Activated B cell treated with CpG ODN at 0.5 μM for 24 hours (primary cell): ENCODE measurements at regions of chr14 and their contacts with region 1.

Region 1: GRCh38 chr14:50311975-50312733 is at the starts of genes DMAC2L and L2HGDH:
- DNase-seq: peak; percentile 91
- ATAC-seq: peak; percentile 94
- H3K4me3 Mint-ChIP-seq: peak within 1 kb of the TSS; percentile 93
- H3K27ac Mint-ChIP-seq: peak within 1 kb of the TSS; percentile 98
- H3K4me1 Mint-ChIP-seq: peaks cover 34% of the 10 kb centered on the region
- H3K27me3 Mint-ChIP-seq: no peaks in the 10 kb centered on the region
- CTCF ChIP-seq: no peak
- total RNA-seq, gene DMAC2L: 31.2 and 32.2 TPM in 2 replicates
- total RNA-seq, gene L2HGDH: 4.3 and 5.2 TPM in 2 replicates

Region 2: DNA sequence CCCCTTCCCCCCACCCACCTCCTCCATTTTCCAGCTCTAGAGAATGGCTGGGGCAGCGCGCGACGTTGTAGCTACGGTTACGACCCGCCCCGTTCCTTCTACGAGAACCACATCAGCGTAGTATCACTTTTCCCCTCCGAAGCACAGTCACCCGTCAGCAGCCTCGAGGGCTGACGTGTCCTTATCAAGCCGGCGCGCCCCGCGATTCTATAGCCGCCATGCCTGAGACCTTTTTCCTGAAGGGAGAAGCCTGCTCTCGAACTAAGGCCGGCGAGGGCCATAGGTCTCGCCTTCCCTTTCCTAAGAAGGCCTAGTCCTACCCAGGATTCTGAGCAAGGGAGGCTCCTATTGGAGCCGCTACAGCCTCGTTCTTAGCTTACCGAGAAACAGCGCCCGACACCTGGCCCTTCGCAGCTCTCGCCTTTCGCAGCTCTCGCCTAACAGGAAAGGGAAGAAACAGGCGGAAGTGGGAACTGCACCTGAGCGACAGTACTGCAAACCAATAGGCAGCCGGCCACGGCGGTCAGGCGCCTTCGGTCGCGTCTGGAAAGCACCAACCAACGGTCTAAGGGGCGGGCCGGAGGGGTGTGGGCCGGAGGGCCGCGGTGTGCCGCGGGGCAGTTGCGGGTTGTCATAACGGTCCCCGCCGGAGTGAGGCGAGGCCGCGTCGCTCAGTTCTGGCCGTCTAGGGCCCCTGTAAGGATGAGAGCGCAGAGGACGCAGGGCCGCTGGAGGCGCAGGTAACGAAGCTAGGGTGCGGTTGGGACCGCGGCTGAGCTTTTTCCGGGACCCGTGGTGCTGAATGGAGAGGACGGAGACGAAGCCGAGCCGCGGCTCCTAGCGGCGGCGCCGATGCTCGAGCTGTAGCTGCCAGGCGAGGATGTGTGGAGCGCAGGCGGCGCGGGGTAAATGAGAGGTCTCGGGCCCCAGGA is 691.7 kb before region 1 on chr14 and contains the starts of genes MGAT2 and RPL36AL:
- CTCF ChIA-PET with region 1: no interaction called
- POLR2A ChIA-PET with region 1: interaction called, 11 read pairs
- intact Hi-C with region 1: no loop called
- DNase-seq: peak; percentile 90
- ATAC-seq: peak; percentile 90
- H3K4me3 Mint-ChIP-seq: peak within 1 kb of the TSS; percentile 97
- H3K27ac Mint-ChIP-seq: peak within 1 kb of the TSS; percentile 97
- H3K4me1 Mint-ChIP-seq: peaks cover 61% of the 10 kb centered on the region
- H3K27me3 Mint-ChIP-seq: no peaks in the 10 kb centered on the region
- CTCF ChIP-seq: no peak
- total RNA-seq, gene MGAT2: 39.7 and 40.5 TPM in 2 replicates
- total RNA-seq, gene RPL36AL: 150 and 166 TPM in 2 replicates

Region 3: GRCh38 chr14:49767562-49768300 is 544.4 kb before region 1 on chr14 and contains the start of gene KLHDC2:
- CTCF ChIA-PET with region 1: interaction called, 3 read pairs
- POLR2A ChIA-PET with region 1: no interaction called
- intact Hi-C with region 1: loop called (anchors 1 kb)
- DNase-seq: peak; percentile 86
- ATAC-seq: peak; percentile 88
- H3K4me3 Mint-ChIP-seq: peak within 1 kb of the TSS; percentile 97
- H3K27ac Mint-ChIP-seq: peak within 1 kb of the TSS; percentile 99
- H3K4me1 Mint-ChIP-seq: peaks cover 33% of the 10 kb centered on the region
- H3K27me3 Mint-ChIP-seq: no peaks in the 10 kb centered on the region
- CTCF ChIP-seq: no peak
- total RNA-seq, gene KLHDC2: 27.0 and 31.2 TPM in 2 replicates

Region 4: DNA sequence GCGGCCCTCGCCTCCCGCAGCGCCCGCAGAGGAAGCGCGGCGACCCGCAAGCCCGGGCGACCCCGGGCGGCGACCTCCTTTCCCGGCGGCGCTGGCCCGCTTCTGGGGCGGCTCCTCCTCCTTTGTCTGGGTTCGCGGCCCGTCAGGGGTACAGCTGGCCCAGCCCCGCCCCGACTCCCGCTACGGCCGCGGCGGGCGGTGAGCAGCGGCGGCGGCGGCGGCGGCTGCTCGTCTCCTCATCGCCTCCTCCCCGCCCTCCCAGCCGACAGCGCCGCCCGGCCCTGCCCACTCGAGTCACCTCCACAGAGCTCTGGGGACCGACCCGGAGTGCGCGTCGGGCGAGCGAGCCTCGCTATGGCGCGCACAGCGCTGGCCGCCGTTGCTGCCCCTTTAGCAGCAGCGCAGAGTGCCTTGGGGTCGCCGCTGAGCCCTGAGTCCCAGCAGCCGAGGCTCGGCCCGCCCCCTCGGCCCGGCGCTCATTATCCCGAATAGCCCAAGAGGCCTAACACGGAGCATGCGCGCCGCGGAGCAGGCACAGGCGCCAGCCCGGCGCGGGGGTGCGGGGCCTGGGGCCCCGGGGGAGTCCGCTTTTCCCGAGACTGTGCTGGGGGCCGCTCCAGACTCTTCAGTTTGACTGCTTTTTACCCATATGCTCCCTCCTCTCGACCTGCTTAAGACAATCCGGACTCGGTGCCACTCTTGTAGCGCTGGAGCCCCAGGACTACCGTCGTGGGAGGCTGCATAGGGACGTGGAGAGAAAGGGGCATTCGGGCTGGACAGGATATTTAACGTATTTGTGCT is 80.5 kb before region 1 on chr14 and contains the start of gene SOS2:
- CTCF ChIA-PET with region 1: no interaction called
- POLR2A ChIA-PET with region 1: interaction called, 11 read pairs
- intact Hi-C with region 1: loop called (anchors 1 kb)
- DNase-seq: peak; percentile 87
- ATAC-seq: peak; percentile 87
- H3K4me3 Mint-ChIP-seq: peak within 1 kb of the TSS; percentile 93
- H3K27ac Mint-ChIP-seq: peak within 1 kb of the TSS; percentile 92
- H3K4me1 Mint-ChIP-seq: peaks cover 35% of the 10 kb centered on the region
- H3K27me3 Mint-ChIP-seq: no peaks in the 10 kb centered on the region
- CTCF ChIP-seq: no peak
- total RNA-seq, gene SOS2: 29.1 and 32.0 TPM in 2 replicates

Region 5: GRCh38 chr14:50272503-50272902 is 39.7 kb before region 1 on chr14:
- CTCF ChIA-PET with region 1: no interaction called
- POLR2A ChIA-PET with region 1: no interaction called
- intact Hi-C with region 1: no loop called
- DNase-seq: no peak
- ATAC-seq: no peak
- H3K4me3 Mint-ChIP-seq: no peak overlapping the region
- H3K27ac Mint-ChIP-seq: no peak overlapping the region
- H3K4me1 Mint-ChIP-seq: no peaks in the 10 kb centered on the region
- H3K27me3 Mint-ChIP-seq: no peaks in the 10 kb centered on the region
- CTCF ChIP-seq: no peak

Region 6: GRCh38 chr14:50396631-50397390 is 84.7 kb after region 1 on chr14 and contains the start of gene CDKL1:
- CTCF ChIA-PET with region 1: interaction called, 3 read pairs
- POLR2A ChIA-PET with region 1: interaction called, 10 read pairs
- intact Hi-C with region 1: no loop called
- DNase-seq: peak; percentile 49
- ATAC-seq: peak; percentile 69
- H3K4me3 Mint-ChIP-seq: peak within 1 kb of the TSS; percentile 87
- H3K27ac Mint-ChIP-seq: peak within 1 kb of the TSS; percentile 68
- H3K4me1 Mint-ChIP-seq: peaks cover 50% of the 10 kb centered on the region
- H3K27me3 Mint-ChIP-seq: no peaks in the 10 kb centered on the region
- CTCF ChIP-seq: no peak
- total RNA-seq, gene CDKL1: 5.2 and 5.9 TPM in 2 replicates

Region 7: DNA sequence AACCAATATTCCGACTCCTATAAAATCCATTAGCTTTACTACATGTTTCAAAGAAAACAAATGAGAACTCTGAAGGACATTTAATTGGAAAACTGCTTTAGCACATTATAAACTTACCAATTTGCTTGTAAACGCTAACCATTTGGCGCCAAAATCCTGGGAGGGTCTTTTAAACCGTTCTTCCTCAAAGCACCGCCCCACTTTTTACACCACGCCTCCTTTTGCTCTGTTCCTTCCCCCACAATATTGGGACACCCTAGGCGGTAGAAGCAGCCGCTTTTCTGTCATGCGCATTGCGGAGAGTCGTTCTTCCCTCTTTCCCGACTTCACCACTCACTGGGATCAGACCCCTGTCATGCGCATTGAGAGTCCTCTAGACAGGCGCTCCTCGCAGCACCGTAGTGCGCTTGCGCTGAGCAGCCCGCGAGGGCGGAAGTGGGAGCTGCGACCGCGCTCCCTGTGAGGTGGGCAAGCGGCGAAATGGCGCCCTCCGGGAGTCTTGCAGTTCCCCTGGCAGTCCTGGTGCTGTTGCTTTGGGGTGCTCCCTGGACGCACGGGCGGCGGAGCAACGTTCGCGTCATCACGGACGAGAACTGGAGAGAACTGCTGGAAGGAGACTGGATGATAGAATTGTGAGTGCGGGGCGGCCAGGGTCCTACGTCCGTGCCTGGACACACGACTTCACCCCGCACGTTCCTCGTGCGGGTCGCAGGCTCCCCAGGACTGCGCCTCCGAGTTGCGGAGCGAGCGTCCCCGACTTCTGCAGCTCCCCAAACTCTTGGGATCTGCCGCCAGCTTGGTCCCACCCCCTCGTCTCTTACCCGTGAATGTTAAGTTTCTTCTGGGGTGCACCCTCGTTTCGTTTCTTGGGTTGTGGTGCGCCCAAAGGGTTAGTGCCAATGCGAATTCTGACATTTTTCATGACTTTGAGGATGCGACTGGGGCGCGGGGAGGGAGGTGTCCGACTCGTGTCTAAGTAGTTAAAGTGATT is 928.0 kb after region 1 on chr14 and contains the start of gene TMX1:
- CTCF ChIA-PET with region 1: no interaction called
- POLR2A ChIA-PET with region 1: no interaction called
- intact Hi-C with region 1: loop called (anchors 1 kb)
- DNase-seq: peak; percentile 83
- ATAC-seq: peak; percentile 92
- H3K4me3 Mint-ChIP-seq: no peak within 1 kb of the TSS
- H3K27ac Mint-ChIP-seq: no peak within 1 kb of the TSS
- H3K4me1 Mint-ChIP-seq: peaks cover 12% of the 10 kb centered on the region
- H3K27me3 Mint-ChIP-seq: no peaks in the 10 kb centered on the region
- CTCF ChIP-seq: no peak
- total RNA-seq, gene TMX1: 24.6 and 25.3 TPM in 2 replicates